ENCODE measurements at regions of chr10 and their contacts with region 1.

Region 1: DNA sequence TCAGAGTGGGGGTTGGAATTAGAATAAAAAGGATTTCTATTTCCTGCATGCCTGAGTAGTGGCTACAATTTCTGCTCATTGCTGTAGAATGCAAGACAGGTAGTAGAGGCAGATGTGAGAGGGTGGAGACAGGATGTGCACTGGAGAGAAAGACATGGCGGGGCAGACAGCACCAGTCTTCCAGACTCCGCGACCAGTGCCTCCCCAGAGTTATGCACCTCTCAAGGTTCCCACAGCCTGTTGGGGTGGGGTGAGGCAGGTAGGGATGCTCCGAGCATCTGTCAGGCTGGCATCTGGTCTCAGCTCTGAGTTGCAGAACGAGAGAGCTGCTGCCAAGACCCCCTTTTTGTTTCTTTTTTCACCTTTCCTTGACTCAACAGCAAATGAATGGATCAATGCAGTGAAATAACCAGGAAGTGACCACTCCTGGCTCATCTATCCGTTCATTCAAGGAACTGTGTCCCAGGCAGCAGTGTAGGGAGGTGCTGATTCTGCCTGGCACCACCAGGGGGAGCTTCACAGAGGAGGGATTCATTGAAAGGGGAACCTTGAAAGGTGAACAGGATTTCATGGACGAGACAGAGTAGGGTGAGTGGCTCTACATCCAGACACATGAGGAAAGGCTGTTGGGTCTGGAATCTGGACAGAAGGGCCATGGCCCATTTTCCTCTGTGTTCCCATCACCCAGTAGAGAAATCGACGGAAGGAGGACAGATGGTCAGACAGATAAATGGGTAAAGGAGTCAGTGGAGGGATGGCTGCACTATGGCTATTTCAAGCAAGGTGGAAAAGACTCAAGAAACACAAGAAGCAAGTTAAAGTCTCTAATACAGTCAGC is 17.2 kb upstream of the SLC18A3 start:
- DNase-seq: peak; percentile 58
- H3K4me3 ChIP-seq: no peak overlapping the region
- H3K27ac ChIP-seq: no peak overlapping the region
- H3K4me1 ChIP-seq: peaks cover 3% of the 10 kb centered on the region
- H3K27me3 ChIP-seq: no peaks in the 10 kb centered on the region
- CTCF ChIP-seq: peak; percentile 89 to 99
- POLR2A ChIP-seq: no peak

Region 2: GRCh38 chr10:49053053-49053997 is 539.6 kb before region 1 on chr10:
- CTCF ChIA-PET with region 1: no interaction called
- POLR2A ChIA-PET with region 1: no interaction called
- dilution Hi-C with region 1: no loop called
- intact Hi-C with region 1: no loop called
- DNase-seq: no peak
- H3K4me3 ChIP-seq: no peak overlapping the region
- H3K27ac ChIP-seq: no peak overlapping the region
- H3K4me1 ChIP-seq: no peaks in the 10 kb centered on the region
- H3K27me3 ChIP-seq: no peaks in the 10 kb centered on the region
- CTCF ChIP-seq: no peak
- POLR2A ChIP-seq: no peak

Region 3: GRCh38 chr10:49094673-49095072 is 498.3 kb before region 1 on chr10:
- CTCF ChIA-PET with region 1: no interaction called
- POLR2A ChIA-PET with region 1: no interaction called
- dilution Hi-C with region 1: no loop called
- intact Hi-C with region 1: no loop called
- DNase-seq: no peak
- H3K4me3 ChIP-seq: no peak overlapping the region
- H3K27ac ChIP-seq: no peak overlapping the region
- H3K4me1 ChIP-seq: no peaks in the 10 kb centered on the region
- H3K27me3 ChIP-seq: no peaks in the 10 kb centered on the region
- CTCF ChIP-seq: no peak
- POLR2A ChIP-seq: no peak

Region 4: GRCh38 chr10:49538381-49539319 is 54.3 kb before region 1 on chr10 and contains the start of gene ERCC6:
- CTCF ChIA-PET with region 1: interaction called, 15 read pairs
- POLR2A ChIA-PET with region 1: no interaction called
- dilution Hi-C with region 1: no loop called
- intact Hi-C with region 1: loop called (anchors 2 kb)
- DNase-seq: peak; percentile 99
- H3K4me3 ChIP-seq: peak within 1 kb of the TSS; percentile 17 to 85 (median 70)
- H3K27ac ChIP-seq: peak within 1 kb of the TSS; percentile 84
- H3K4me1 ChIP-seq: peaks cover 45% of the 10 kb centered on the region
- H3K27me3 ChIP-seq: no peaks in the 10 kb centered on the region
- CTCF ChIP-seq: no peak
- POLR2A ChIP-seq: peak; percentile 39
- total RNA-seq, gene ERCC6: 39.6 and 59.6 TPM in 2 replicates

Region 5: DNA sequence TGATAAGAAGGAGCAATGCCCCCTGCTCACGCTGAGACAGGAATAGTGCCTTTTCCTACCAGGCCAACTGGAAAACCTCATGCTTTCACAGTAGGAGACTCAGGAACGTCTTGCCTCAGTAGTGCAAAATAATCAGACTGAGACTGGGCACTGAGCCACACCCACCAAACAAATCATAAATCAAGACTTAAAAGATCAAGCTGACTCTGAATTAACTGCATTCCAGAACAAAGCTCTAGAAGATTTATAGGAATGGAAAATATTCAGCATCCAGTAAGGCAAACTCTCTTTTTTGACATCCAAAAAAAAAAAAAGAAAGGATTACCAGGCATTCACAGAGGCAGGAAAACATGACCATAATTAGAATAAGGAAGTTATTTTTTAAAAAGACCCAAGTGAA is 13.3 kb before region 1 on chr10:
- CTCF ChIA-PET with region 1: interaction called, 11 read pairs
- POLR2A ChIA-PET with region 1: no interaction called
- dilution Hi-C with region 1: no loop called
- intact Hi-C with region 1: no loop called
- DNase-seq: no peak
- H3K4me3 ChIP-seq: no peak overlapping the region
- H3K27ac ChIP-seq: no peak overlapping the region
- H3K4me1 ChIP-seq: no peaks in the 10 kb centered on the region
- H3K27me3 ChIP-seq: no peaks in the 10 kb centered on the region
- CTCF ChIP-seq: no peak
- POLR2A ChIP-seq: no peak

Region 6: DNA sequence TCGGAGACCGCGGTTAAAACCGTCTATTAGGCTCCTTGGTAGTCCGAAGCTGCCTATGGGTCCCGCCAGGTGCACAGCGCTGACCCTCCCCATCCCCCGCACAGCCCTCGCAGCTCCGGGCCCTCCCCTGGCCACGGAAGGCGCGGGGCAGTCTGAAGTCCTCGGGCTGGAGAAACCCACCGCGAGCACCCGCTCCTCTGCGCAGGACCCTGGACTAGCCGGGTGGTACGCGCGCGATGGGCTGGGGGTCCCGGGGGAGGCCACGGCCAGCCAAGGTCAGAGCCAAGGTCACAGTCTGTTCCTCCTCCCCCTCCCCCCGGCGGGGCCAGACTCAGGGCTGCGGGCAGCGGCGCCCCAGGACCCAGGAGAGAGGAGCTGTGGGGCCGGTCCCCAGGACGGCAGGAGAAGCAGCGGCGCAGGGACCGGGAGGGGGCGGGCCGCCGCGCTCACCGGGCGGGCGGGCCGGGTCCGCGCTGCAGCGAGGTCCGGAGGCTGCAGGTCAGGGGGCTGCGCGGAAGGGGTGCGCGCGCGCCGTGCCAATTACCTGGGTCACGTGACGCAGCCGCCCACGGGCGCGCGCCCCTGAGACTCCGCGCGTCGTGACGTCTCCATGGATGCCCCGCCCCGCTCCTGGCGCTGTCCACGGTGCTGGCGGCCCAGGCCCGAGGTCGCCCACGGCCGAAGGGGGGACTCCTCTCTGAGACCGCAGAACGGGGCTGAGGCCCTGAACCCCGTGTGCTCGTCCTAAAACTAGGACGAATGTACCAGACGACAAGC is 169.0 kb after region 1 on chr10 and contains the start of gene OGDHL:
- CTCF ChIA-PET with region 1: interaction called, 3 read pairs
- POLR2A ChIA-PET with region 1: no interaction called
- dilution Hi-C with region 1: no loop called
- intact Hi-C with region 1: loop called (anchors 5 kb)
- DNase-seq: peak; percentile 58
- H3K4me3 ChIP-seq: peak within 1 kb of the TSS; percentile 44 to 55 (median 48)
- H3K27ac ChIP-seq: no peak within 1 kb of the TSS
- H3K4me1 ChIP-seq: peaks cover 3% of the 10 kb centered on the region
- H3K27me3 ChIP-seq: peaks cover 0 to 5% of the 10 kb centered on the region in 2 experiments
- CTCF ChIP-seq: no peak
- POLR2A ChIP-seq: no peak
- total RNA-seq, gene OGDHL: 0.58 and 1.0 TPM in 2 replicates

Region 7: DNA sequence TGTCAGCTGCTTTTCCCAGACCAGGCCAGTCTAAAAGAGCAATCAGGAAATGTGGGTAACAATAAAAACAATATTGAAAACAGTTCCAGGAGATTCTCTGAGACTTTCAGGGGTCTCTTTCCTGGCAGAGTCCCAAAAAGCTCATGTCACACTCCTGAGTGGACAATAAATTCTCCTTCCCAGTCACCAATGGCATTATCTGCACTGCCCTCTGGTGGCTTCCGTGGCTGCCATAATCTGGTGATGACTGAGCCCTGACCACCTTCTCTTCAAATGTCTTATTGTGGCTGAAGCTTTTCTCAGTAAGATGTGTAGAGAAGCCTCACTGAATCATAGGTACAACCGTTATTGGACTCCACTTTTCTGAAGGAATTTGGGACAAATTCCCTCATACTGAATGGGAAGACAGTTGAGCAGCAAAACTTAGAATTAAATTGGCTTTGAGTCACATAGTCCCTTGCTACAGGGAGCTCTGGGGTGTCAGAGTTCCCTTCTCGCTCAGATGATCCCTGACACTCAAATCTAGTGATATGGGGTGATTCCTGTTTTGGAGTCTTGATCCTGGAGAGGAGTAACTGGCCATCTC is 682.8 kb after region 1 on chr10:
- CTCF ChIA-PET with region 1: interaction called, 20 read pairs
- POLR2A ChIA-PET with region 1: no interaction called
- dilution Hi-C with region 1: no loop called
- intact Hi-C with region 1: loop called (anchors 2 kb)
- DNase-seq: peak; percentile 39
- H3K4me3 ChIP-seq: no peak overlapping the region
- H3K27ac ChIP-seq: no peak overlapping the region
- H3K4me1 ChIP-seq: no peaks in the 10 kb centered on the region
- H3K27me3 ChIP-seq: peaks cover 2 to 10% of the 10 kb centered on the region in 2 experiments
- CTCF ChIP-seq: peak; percentile 52 to 53
- POLR2A ChIP-seq: no peak